GM12878 (cell line): ENCODE measurements at regions of chr9 and their contacts with region 1.

Region 1: GRCh38 chr9:33225319-33226149 is 14.4 kb upstream of the SPINK4 start:
- DNase-seq: peak; percentile 64
- ATAC-seq: peak; percentile 63
- H3K4me3 ChIP-seq: no peak overlapping the region
- H3K27ac ChIP-seq: no peak overlapping the region
- H3K4me1 ChIP-seq: peaks cover 39% of the 10 kb centered on the region
- H3K27me3 ChIP-seq: no peaks in the 10 kb centered on the region
- CTCF ChIP-seq: peak; percentile 56 to 76 (median 64); a peak in 5 of 6 replicates
- EP300 ChIP-seq: no peak
- POLR2A ChIP-seq: no peak
- RAD21 ChIP-seq: peak; percentile 85

Region 2: DNA sequence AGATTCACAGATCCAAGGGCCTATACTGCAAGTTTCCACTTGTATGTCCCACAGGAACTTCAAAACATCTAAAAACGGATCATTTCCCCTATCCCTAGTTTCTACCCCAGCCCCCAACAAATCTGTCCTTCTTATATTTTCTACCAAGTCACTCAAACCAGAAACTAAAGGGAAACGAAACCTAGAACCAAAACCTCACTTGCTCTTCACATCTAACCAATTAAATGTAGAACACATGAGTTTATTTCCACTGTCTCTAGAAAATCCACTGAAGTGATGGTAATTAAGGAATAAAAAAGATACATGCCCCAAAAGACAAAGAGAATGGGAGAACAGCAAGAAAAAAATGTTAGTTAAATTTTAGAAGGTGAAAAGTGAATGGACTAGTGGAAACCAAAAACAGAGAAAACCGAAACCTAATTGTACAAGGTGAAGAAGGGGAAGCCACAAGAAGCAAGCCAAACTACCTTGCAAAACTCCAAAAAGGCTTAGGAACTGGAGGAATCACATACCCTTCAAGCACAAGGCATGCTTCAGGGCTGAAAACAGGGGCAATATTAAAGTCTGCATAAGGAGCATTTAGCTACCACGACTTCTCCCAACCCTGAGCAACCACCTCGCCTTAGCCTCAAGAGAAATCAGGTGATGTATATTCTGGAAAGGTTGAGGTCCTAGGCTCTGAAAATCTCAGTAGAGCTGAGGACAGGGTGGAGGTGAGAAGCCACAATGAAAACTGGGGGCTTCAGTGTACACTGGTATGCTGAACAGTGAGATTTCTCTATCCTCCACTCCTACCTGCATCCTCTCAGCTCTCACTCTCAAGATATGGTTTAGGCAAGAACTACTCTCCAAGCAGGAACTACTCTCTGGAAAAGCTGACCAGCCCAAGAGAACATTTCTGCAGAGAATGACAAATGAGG is 160.1 kb before region 1 on chr9:
- CTCF ChIA-PET with region 1: interaction called, 9 read pairs
- POLR2A ChIA-PET with region 1: no interaction called
- RAD21 ChIA-PET with region 1: interaction called, 4 read pairs
- SMC1A ChIA-PET with region 1: interaction called, 12 read pairs
- in situ Hi-C with region 1: no loop called
- intact Hi-C with region 1: no loop called
- DNase-seq: peak; percentile 60
- ATAC-seq: peak; percentile 89
- H3K4me3 ChIP-seq: peak overlapping the region; percentile 30; the same call in 1 of the 2 replicates
- H3K27ac ChIP-seq: peak overlapping the region; percentile 94
- H3K4me1 ChIP-seq: peaks cover 15% of the 10 kb centered on the region
- H3K27me3 ChIP-seq: no peaks in the 10 kb centered on the region
- CTCF ChIP-seq: no peak
- EP300 ChIP-seq: peak; percentile 19 to 40; a peak in 1 of 4 replicates
- POLR2A ChIP-seq: no peak
- RAD21 ChIP-seq: no peak

Region 3: GRCh38 chr9:33139421-33140228 is 85.9 kb before region 1 on chr9:
- CTCF ChIA-PET with region 1: interaction called, 8 read pairs
- POLR2A ChIA-PET with region 1: interaction called, 3 read pairs
- RAD21 ChIA-PET with region 1: interaction called, 6 read pairs
- SMC1A ChIA-PET with region 1: interaction called, 13 read pairs
- in situ Hi-C with region 1: no loop called
- intact Hi-C with region 1: no loop called
- DNase-seq: no peak
- ATAC-seq: no peak
- H3K4me3 ChIP-seq: no peak overlapping the region
- H3K27ac ChIP-seq: peak overlapping the region; percentile 85
- H3K4me1 ChIP-seq: peaks cover 94% of the 10 kb centered on the region
- H3K27me3 ChIP-seq: no peaks in the 10 kb centered on the region
- CTCF ChIP-seq: no peak
- EP300 ChIP-seq: no peak
- POLR2A ChIP-seq: peak; percentile 45; the same call in 1 of the 2 replicates
- RAD21 ChIP-seq: no peak

Region 4: DNA sequence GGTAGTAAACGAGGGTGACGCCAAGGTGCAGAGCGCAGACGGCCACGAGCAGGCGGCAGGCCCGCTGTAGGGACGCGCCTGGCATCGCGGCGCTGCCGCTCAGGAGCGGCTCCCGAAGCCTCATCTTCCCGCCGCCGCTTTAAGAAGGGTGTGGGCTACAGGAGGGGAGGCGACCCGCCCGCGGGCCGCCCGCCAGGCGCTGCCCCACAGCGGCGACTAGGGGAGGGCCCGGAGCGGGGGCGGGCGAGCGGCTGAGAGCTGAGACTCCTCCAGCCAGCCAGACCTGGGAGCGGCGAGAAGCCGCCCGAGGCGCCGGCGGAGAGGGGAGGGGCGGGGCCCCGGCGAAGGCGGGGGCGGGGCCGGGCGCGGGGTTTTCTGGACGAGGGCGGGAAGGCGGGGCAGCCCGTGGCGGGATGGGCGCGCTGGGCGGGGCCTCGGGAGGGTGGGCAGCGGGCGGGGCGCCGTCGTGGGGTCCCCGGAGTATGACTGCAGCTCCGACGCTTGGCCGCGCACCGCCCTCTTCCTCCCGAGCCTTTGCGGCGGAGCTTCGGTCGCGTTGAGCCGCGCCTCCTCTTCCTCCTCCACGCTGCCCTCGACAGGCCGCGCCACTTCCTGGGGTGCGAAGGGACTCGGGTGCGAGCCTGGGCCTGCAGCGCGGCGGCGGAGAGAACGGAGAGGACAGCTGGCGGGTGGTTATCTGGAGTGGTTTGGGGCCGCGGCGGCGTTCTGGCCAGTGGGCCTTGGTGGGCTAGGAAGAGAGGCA is 58.3 kb before region 1 on chr9 and contains the start of gene B4GALT1:
- CTCF ChIA-PET with region 1: interaction called, 44 read pairs
- POLR2A ChIA-PET with region 1: interaction called, 7 read pairs
- RAD21 ChIA-PET with region 1: interaction called, 21 read pairs
- SMC1A ChIA-PET with region 1: interaction called, 34 read pairs
- in situ Hi-C with region 1: no loop called
- intact Hi-C with region 1: loop called (anchors 2 kb)
- DNase-seq: peak; percentile 75
- ATAC-seq: peak; percentile 69
- H3K4me3 ChIP-seq: peak within 1 kb of the TSS; percentile 90
- H3K27ac ChIP-seq: peak within 1 kb of the TSS; percentile 92
- H3K4me1 ChIP-seq: peaks cover 32% of the 10 kb centered on the region
- H3K27me3 ChIP-seq: no peaks in the 10 kb centered on the region
- CTCF ChIP-seq: 0 out of 6 replicates have a peak, but pooled peaks of 1 of the 3 experiments have one; percentile 1
- EP300 ChIP-seq: 0 out of 4 replicates have a peak, but pooled peaks of 1 of the 2 experiments have one; percentile 11
- POLR2A ChIP-seq: peak; percentile 93
- RAD21 ChIP-seq: peak; percentile 25; the same call in 1 of the 2 replicates
- polyA plus RNA-seq, gene B4GALT1: 22.4 to 23.3 TPM

Region 5: DNA sequence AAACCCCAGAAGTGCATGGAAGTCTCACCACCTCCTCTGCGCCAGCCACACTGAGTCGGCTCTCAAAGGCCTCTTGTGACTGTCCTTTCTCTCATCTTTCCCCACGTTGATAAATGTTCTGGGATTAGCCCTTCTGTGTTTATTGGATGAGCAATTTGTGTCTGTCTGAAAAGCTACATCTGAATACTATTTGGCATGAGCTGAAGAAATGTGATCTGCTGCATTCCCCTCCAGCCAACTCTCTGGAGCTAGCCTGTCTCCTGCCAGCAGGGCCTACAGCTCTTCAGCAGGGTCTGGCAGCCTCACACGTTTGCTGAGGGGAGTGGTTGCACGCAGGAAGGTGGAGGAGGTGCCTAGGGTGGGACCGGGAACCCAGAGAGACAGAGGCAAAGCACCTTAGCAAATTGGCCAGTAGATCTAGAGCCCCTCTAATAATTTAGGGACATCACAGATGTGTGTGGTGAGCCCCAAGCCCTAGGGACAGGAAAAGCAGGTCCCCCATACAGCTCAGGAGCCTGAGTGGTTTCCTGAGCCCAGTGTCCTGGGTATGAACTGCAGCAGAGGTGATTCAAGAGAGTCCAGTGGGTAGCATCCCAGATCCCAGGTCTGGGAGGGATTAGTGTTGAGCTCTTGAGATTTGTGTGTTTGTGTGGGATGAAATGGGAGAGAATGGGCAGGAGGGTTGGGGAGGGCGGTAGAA is 37.9 kb before region 1 on chr9:
- CTCF ChIA-PET with region 1: interaction called, 8 read pairs
- POLR2A ChIA-PET with region 1: no interaction called
- RAD21 ChIA-PET with region 1: interaction called, 10 read pairs
- SMC1A ChIA-PET with region 1: interaction called, 8 read pairs
- in situ Hi-C with region 1: no loop called
- intact Hi-C with region 1: no loop called
- DNase-seq: no peak
- ATAC-seq: no peak
- H3K4me3 ChIP-seq: no peak overlapping the region
- H3K27ac ChIP-seq: no peak overlapping the region
- H3K4me1 ChIP-seq: peaks cover 13% of the 10 kb centered on the region
- H3K27me3 ChIP-seq: no peaks in the 10 kb centered on the region
- CTCF ChIP-seq: no peak
- EP300 ChIP-seq: no peak
- POLR2A ChIP-seq: no peak
- RAD21 ChIP-seq: no peak

Region 6: GRCh38 chr9:33249087-33249657 is 23.6 kb after region 1 on chr9:
- CTCF ChIA-PET with region 1: interaction called, 10 read pairs
- POLR2A ChIA-PET with region 1: no interaction called
- RAD21 ChIA-PET with region 1: interaction called, 4 read pairs
- SMC1A ChIA-PET with region 1: interaction called, 5 read pairs
- in situ Hi-C with region 1: no loop called
- intact Hi-C with region 1: no loop called
- DNase-seq: no peak
- ATAC-seq: peak; percentile 79
- H3K4me3 ChIP-seq: no peak overlapping the region
- H3K27ac ChIP-seq: peak overlapping the region; percentile 10; the same call in 1 of the 2 replicates
- H3K4me1 ChIP-seq: peaks cover 16% of the 10 kb centered on the region
- H3K27me3 ChIP-seq: no peaks in the 10 kb centered on the region
- CTCF ChIP-seq: no peak
- EP300 ChIP-seq: no peak
- POLR2A ChIP-seq: no peak
- RAD21 ChIP-seq: 0 out of 2 replicates have a peak, but pooled peaks have one; percentile 9